Posterior cingulate gyrus (tissue), 11 donors: ENCODE measurements at regions of chr6 and their contacts with region 1.

Region 1: GRCh38 chr6:28863604-28864320 is 60.0 kb downstream of the TRIM27 start:
- DNase-seq: peak; percentile 63 to 96 (median 80)

Region 2: DNA sequence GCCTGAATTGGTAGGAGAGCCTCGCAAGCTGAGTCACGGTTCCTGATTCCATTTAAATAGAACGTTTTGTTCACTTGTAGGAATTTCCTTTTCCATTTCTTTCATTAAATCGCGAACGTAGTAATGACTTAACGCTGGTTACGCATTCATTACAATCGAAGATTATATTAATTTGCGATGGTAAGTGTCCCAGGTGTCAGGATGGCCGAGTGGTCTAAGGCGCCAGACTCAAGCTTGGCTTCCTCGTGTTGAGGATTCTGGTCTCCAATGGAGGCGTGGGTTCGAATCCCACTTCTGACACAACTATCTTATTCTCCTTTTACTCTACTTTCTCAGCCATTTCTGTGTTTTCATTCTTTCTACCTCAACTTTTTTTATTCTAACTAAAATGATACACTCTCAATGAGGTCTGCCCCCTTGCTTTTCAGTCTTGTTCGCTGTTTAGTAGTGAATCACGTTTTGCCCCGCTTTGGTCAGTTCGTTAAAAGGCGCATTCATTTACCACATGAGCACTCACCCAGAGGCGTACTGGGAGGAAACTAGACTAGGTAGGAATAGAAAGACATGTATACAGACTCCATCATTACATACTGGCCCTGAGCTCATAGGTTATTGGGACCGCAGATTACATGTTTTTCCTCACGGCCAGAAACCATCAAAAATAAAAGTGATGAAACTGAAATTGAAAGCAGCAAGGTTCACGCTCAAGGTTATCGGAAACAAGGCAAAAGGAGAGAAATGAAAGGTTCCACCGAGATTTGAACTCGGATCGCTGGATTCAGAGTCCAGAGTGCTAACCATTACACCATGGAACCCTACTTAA is 77.3 kb after region 1 on chr6:
- intact Hi-C with region 1: loop called (anchors 2 kb)
- DNase-seq: peak in 8 of 10 donors; percentile 47 to 91 (median 67)